Mammary epithelial cell (primary cell): ENCODE measurements at regions of chr7 and their contacts with region 1.

Region 1: DNA sequence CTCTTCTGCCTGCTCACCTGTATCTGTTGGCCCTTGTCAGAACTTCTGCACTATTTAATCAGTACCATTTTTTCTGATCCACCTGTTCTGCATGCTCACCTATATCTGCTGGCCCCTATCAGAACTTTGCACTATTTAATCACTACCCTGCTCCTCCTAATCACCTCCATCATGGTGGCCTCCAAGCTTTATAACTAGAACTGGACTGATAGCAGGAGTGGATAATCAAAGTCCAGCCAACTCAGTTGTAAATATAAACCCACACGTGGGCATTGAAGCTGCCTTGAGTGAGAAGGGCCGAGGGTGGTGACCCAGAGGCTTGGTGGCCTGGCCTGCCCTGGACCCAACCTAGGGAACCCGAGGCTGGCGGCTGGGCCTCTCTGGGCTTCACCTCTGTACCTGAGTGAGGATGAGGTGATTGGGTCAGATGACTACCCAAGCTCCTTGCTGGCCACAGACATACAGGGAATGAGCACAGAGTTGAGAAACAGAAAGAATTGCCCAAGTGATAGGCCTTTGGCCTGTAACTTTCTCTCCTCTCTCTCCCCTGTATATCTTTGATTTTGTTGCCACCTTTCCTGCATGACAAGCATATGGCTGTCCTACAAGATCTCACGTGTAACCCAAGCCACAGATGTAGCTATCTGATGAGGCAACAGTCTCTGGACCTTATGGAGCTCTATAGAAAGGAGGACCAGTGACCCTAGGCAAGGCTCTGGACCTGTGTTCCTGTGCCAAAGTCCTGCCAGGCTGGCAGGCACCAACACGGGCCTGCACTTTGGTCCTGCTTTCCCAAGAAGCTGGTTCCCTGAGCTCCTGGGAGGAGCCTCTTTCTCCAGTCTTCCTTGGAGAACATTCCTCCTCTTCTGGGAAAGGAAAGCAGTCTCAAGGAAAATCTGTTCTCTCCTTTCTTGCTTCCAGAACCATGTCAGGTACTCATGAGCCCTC is 23.4 kb upstream of the FAM3C start:
- DNase-seq: no peak
- H3K4me3 ChIP-seq: no peak overlapping the region
- H3K27ac ChIP-seq: no peak overlapping the region
- H3K4me1 ChIP-seq: peaks cover 9% of the 10 kb centered on the region
- H3K27me3 ChIP-seq: no peaks in the 10 kb centered on the region
- CTCF ChIP-seq: no peak

Region 2: GRCh38 chr7:121351679-121352078 is 67.8 kb before region 1 on chr7:
- CTCF ChIA-PET with region 1: interaction called, 11 read pairs
- dilution Hi-C with region 1: no loop called
- in situ Hi-C with region 1: no loop called
- intact Hi-C with region 1: no loop called
- DNase-seq: no peak
- H3K4me3 ChIP-seq: no peak overlapping the region
- H3K27ac ChIP-seq: no peak overlapping the region
- H3K4me1 ChIP-seq: no peaks in the 10 kb centered on the region
- H3K27me3 ChIP-seq: no peaks in the 10 kb centered on the region
- CTCF ChIP-seq: peak; percentile 2 to 7